Heart left ventricle (tissue), 16 donors: ENCODE measurements at regions of chr19 and their contacts with region 1.

Region 1: DNA sequence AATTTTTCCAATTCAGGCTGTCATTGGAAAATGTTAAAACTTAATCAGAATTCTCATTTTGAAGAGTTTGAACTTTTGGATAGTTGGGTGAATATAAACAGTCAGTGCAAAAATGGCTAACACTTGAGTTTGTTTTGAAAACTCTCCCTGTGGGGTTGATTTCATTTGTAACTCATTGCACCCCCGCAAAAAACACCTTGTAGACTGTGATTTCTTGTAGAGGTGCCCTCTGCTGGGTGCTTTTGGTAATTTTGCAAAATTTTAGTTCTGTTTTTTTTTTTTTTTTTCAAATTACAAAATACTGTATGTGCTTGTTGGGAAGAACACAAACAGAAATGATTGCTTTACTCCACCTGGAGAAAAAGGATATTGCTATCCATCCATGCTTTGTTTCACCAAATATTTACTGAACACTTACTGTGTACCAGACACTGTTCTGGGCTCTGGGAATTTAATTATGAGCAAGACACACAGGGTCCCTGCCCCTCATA is 28.2 kb upstream of the GPI start:
- DNase-seq: no peak
- ATAC-seq: no peak
- H3K4me3 ChIP-seq: no peak overlapping the region
- H3K27ac ChIP-seq: peak overlapping the region in 3 of 12 donors; percentile 2 to 12 (median 10)
- H3K4me1 ChIP-seq: peaks cover 0 to 35% (median 15%) of the 10 kb centered on the region in 12 donors
- H3K27me3 ChIP-seq: no peaks in the 10 kb centered on the region
- CTCF ChIP-seq: peak; percentile 53 to 78 (median 66)
- POLR2A ChIP-seq: no peak

Region 2: DNA sequence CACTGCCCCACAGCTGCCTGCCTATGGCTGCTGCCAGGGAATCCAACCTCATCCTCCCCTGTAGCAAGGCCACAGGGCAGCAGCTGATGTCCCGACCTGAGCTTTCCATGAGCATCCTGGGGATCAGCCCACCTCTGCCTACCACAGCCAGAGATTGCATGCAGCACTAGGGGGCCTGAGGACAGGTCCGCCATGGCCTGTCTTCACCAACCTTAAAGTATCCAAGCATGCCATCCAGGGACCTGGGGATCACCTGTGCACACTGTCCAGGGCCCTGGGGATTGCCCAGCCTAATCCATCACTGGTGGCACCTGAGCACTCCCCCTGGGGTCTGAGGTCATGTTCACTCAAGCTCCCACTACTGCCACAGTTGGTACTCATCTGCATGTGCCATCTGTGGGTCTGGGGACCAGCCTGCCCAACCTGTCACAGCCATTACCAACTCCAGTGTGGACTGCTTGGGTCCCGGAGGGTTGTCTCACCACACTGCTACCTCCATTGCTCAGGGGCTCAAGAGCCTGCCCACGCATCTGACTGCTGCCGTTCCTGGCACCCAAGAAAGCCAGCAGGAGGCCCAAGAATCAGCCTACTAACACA is 487.2 kb before region 1 on chr19:
- intact Hi-C with region 1: no loop called
- DNase-seq: no peak
- ATAC-seq: no peak
- H3K4me3 ChIP-seq: no peak overlapping the region
- H3K27ac ChIP-seq: no peak overlapping the region
- H3K4me1 ChIP-seq: no peaks in the 10 kb centered on the region
- H3K27me3 ChIP-seq: peaks cover 0 to 3% (median 0%) of the 10 kb centered on the region in 9 donors
- CTCF ChIP-seq: no peak
- POLR2A ChIP-seq: no peak

Region 3: GRCh38 chr19:34253699-34254551 is 82.9 kb before region 1 on chr19:
- intact Hi-C with region 1: loop called in 7 of 10 experiments (anchors 2 to 10 kb)
- DNase-seq: peak; percentile 86 to 93 (median 90)
- ATAC-seq: peak; percentile 12 to 97 (median 62)
- H3K4me3 ChIP-seq: peak overlapping the region; percentile 66 to 100 (median 84)
- H3K27ac ChIP-seq: peak overlapping the region; percentile 91 to 99 (median 96)
- H3K4me1 ChIP-seq: peaks cover 0 to 39% (median 20%) of the 10 kb centered on the region in 12 donors
- H3K27me3 ChIP-seq: peaks cover 0 to 4% (median 0%) of the 10 kb centered on the region in 9 donors
- CTCF ChIP-seq: no peak
- POLR2A ChIP-seq: peak; percentile 41 to 82

Region 4: DNA sequence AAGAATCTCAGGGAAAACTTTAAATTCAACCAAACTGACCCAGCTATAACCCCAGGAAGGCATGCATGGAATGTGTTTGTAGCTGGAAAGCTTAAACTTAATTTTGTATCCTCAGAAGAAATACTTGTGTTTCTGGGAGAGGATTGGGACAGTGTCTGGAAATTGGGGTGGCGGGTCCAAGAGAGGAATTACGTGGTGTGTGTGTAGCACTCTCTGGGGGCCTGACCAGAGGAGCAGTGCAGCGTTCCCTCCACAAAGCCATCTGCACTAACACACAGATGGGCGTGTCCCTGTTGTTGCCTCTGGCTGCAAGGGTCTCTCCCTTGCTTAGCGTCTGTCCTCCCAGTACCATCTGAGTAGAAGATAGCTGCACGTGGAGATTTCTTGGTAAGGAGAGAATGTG is 76.1 kb before region 1 on chr19:
- intact Hi-C with region 1: loop called in 9 of 10 experiments (anchors 2 to 10 kb)
- DNase-seq: no peak
- ATAC-seq: peak in 2 of 4 donors; percentile 29 to 40
- H3K4me3 ChIP-seq: no peak overlapping the region
- H3K27ac ChIP-seq: no peak overlapping the region
- H3K4me1 ChIP-seq: peaks cover 3 to 68% (median 36%) of the 10 kb centered on the region in 12 donors
- H3K27me3 ChIP-seq: no peaks in the 10 kb centered on the region
- CTCF ChIP-seq: no peak
- POLR2A ChIP-seq: no peak

Region 5: GRCh38 chr19:34269968-34270621 is 66.7 kb before region 1 on chr19:
- intact Hi-C with region 1: loop called in 4 of 10 experiments (anchors 5 to 10 kb)
- DNase-seq: peak in 4 of 5 donors; percentile 64 to 80 (median 74)
- ATAC-seq: peak; percentile 74 to 91 (median 85)
- H3K4me3 ChIP-seq: peak overlapping the region in 9 of 12 donors; percentile 4 to 58 (median 30)
- H3K27ac ChIP-seq: peak overlapping the region; percentile 68 to 93 (median 85)
- H3K4me1 ChIP-seq: peaks cover 0 to 78% (median 60%) of the 10 kb centered on the region in 12 donors
- H3K27me3 ChIP-seq: no peaks in the 10 kb centered on the region
- CTCF ChIP-seq: no peak
- POLR2A ChIP-seq: peak in 1 of 2 donors; percentile 34

Region 6: GRCh38 chr19:34501339-34502320 is 164.8 kb after region 1 on chr19:
- intact Hi-C with region 1: no loop called
- DNase-seq: peak; percentile 90 to 96 (median 94)
- ATAC-seq: peak; percentile 83 to 90 (median 86)
- H3K4me3 ChIP-seq: peak overlapping the region in 1 of 12 donors; percentile 11
- H3K27ac ChIP-seq: peak overlapping the region in 6 of 12 donors; percentile 3 to 56 (median 26)
- H3K4me1 ChIP-seq: peaks cover 0 to 39% (median 10%) of the 10 kb centered on the region in 12 donors
- H3K27me3 ChIP-seq: peaks cover 0 to 5% (median 0%) of the 10 kb centered on the region in 9 donors
- CTCF ChIP-seq: peak; percentile 98 to 99 (median 99)
- POLR2A ChIP-seq: no peak